ENCODE measurements at regions of chr6 and their contacts with region 1.

Region 1: GRCh38 chr6:110682460-110682853 is 132.8 kb downstream of the CDK19 start:
- DNase-seq: peak; percentile 73
- ATAC-seq: peak; percentile 99
- H3K4me3 Mint-ChIP-seq: no peak overlapping the region
- H3K27ac Mint-ChIP-seq: no peak overlapping the region
- H3K4me1 Mint-ChIP-seq: peaks cover 12% of the 10 kb centered on the region
- H3K27me3 Mint-ChIP-seq: no peaks in the 10 kb centered on the region

Region 2: DNA sequence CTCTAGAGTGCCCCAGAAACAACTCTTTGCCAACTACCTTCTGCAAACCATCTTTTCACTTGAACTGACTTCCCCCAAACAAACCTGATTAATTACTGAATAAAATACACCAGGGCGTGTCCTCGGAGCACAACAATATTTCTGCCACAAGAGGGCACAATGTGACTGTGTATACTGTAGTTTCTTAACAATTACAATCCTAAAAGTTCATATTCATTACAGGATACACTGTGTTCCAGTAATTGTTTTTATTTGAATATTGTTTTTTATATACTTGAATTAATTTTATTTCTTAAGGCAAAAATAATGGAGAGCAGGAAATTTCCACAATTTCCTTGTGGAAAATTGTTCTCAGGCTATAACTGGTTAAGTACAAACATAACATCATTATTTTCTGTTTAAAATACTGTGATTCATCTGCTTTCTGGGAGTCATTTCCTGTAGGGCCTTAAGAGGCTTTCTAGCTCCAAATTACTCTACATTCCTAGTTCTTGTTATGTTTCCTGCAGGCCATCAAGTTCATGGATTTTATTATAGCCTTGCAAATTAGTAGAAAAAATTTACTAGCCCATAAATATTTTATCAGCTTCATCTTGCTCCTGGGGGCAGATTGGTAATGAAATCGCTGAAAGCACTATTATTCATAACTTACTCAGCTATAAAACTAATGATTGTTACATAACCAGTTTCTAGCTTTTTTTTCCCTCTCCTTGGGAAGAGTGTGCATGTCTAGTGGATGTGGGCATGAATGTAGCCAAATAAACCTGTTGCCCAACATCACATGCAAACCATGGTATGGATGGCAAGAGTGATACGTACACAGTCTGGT is 154.1 kb before region 1 on chr6:
- CTCF ChIA-PET with region 1: interaction called, 11 read pairs
- POLR2A ChIA-PET with region 1: interaction called, 4 read pairs
- intact Hi-C with region 1: loop called (anchors 1 kb)
- DNase-seq: peak; percentile 69
- ATAC-seq: peak; percentile 77
- H3K4me3 Mint-ChIP-seq: no peak overlapping the region
- H3K27ac Mint-ChIP-seq: no peak overlapping the region
- H3K4me1 Mint-ChIP-seq: peaks cover 9% of the 10 kb centered on the region
- H3K27me3 Mint-ChIP-seq: peaks cover 4% of the 10 kb centered on the region

Region 3: GRCh38 chr6:110738899-110739365 is 56.5 kb after region 1 on chr6:
- CTCF ChIA-PET with region 1: no interaction called
- POLR2A ChIA-PET with region 1: no interaction called
- intact Hi-C with region 1: no loop called
- DNase-seq: no peak
- ATAC-seq: no peak
- H3K4me3 Mint-ChIP-seq: no peak overlapping the region
- H3K27ac Mint-ChIP-seq: no peak overlapping the region
- H3K4me1 Mint-ChIP-seq: peaks cover 2% of the 10 kb centered on the region
- H3K27me3 Mint-ChIP-seq: no peaks in the 10 kb centered on the region

Region 4: DNA sequence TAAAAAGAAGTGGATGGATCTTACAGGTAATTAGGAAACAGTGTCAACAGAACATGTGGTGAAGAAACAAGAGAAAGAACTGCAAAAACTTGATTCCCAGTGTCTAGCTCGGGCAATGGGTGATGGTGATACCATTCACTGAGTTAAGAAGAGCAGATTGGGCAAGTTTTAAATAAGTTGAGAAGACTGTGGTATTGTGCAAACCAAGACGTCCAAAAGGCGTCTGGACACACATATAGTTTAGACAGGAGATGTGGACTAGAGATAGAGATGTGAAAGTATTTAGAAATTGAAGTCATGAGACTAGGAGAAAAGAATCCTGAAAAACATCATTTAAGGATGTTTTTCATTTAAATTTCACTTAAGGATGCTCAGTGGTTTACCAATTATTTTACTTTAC is 78.9 kb after region 1 on chr6:
- CTCF ChIA-PET with region 1: no interaction called
- POLR2A ChIA-PET with region 1: no interaction called
- intact Hi-C with region 1: no loop called
- DNase-seq: no peak
- ATAC-seq: no peak
- H3K4me3 Mint-ChIP-seq: no peak overlapping the region
- H3K27ac Mint-ChIP-seq: no peak overlapping the region
- H3K4me1 Mint-ChIP-seq: peaks cover 3% of the 10 kb centered on the region
- H3K27me3 Mint-ChIP-seq: no peaks in the 10 kb centered on the region

Region 5: GRCh38 chr6:110784610-110784979 is 102.1 kb after region 1 on chr6:
- CTCF ChIA-PET with region 1: no interaction called
- POLR2A ChIA-PET with region 1: no interaction called
- intact Hi-C with region 1: no loop called
- DNase-seq: no peak
- ATAC-seq: peak; percentile 55
- H3K4me3 Mint-ChIP-seq: no peak overlapping the region
- H3K27ac Mint-ChIP-seq: no peak overlapping the region
- H3K4me1 Mint-ChIP-seq: peaks cover 39% of the 10 kb centered on the region
- H3K27me3 Mint-ChIP-seq: no peaks in the 10 kb centered on the region

Region 6: GRCh38 chr6:110944681-110945151 is 262.3 kb after region 1 on chr6:
- CTCF ChIA-PET with region 1: interaction called, 27 read pairs
- POLR2A ChIA-PET with region 1: interaction called, 3 read pairs
- intact Hi-C with region 1: loop called (anchors 1 kb)
- DNase-seq: peak; percentile 71
- ATAC-seq: peak; percentile 98
- H3K4me3 Mint-ChIP-seq: no peak overlapping the region
- H3K27ac Mint-ChIP-seq: peak overlapping the region; percentile 60
- H3K4me1 Mint-ChIP-seq: peaks cover 15% of the 10 kb centered on the region
- H3K27me3 Mint-ChIP-seq: no peaks in the 10 kb centered on the region

Region 7: DNA sequence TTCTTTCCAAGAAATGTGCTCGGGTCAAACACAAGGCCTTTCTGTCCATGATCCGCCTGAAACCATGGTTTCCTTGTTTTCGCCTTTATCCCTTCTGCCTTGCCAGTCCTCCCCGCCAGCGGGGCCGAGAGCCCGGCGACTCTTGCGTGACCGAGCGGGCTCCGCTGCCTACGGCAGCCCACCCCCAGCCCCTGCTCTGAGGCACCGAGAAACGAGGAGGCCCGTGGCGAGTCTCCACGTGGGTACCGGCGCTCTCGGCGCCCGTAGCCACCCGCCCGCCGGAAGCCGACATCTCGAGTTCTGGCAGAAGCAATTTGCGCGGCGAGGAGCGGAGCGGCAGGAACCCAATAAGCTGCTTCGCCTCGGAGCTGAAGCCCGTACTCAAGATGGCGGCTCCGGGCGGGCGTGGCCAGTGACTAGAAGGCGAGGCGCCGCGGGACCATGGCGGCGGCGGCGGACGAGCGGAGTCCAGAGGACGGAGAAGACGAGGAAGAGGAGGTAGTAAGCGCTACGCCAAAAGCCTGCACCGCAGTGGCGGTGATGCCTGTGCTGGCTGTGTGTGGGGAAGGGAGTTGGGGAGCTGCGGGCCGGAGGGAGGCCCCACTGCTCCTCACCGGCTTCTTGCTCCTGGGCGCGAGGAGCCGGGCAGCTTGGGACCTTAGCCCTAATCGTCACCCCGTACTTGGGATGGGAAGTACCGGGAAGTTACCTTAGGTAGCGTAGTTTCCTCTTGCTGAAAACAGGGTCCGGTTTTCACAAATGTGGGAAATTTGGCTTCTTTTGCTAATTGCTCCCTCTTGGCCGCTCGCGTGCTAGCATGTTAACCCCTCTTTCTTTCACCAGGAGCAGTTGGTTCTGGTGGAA is 276.1 kb after region 1 on chr6 and contains the start of gene GTF3C6:
- CTCF ChIA-PET with region 1: interaction called, 10 read pairs
- POLR2A ChIA-PET with region 1: interaction called, 3 read pairs
- intact Hi-C with region 1: no loop called
- DNase-seq: peak; percentile 97
- ATAC-seq: peak; percentile 100
- H3K4me3 Mint-ChIP-seq: peak within 1 kb of the TSS; percentile 90
- H3K27ac Mint-ChIP-seq: peak within 1 kb of the TSS; percentile 97
- H3K4me1 Mint-ChIP-seq: peaks cover 14% of the 10 kb centered on the region
- H3K27me3 Mint-ChIP-seq: peaks cover 1% of the 10 kb centered on the region
- total RNA-seq, gene GTF3C6: 93.0 to 106 TPM

Region 8: GRCh38 chr6:110999634-111000270 is 317.3 kb after region 1 on chr6:
- CTCF ChIA-PET with region 1: interaction called, 7 read pairs
- POLR2A ChIA-PET with region 1: no interaction called
- intact Hi-C with region 1: loop called in 1 of 2 experiments (anchors 1 kb)
- DNase-seq: no peak
- ATAC-seq: no peak
- H3K4me3 Mint-ChIP-seq: no peak overlapping the region
- H3K27ac Mint-ChIP-seq: no peak overlapping the region
- H3K4me1 Mint-ChIP-seq: peaks cover 4% of the 10 kb centered on the region
- H3K27me3 Mint-ChIP-seq: no peaks in the 10 kb centered on the region

Region 9: DNA sequence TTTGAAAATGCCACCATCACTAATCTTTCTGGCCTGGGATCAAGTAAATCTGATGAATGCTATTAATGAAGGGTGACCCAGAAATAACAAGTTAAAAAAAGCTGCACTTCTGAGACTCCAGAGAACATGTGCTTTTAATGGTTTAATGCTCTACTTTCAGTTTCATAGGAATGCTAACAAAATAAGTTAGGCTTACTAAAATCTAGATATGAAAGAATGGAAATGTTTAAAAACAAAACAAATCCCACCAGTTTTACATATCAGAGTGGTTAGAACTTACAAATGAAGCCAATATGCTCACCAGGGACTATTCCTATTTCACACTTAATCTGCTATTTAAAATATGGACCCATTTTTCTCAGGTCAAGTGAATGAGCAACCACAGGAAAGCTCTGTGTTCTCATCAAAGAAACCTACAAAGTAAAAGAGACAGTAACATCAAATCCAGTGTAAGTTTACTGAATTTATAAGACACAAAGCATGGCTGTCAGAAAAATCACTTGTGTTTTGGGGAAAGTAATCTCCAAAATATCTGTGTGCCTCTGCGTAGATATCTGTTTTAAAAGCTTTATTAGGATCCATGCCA is 1150.5 kb after region 1 on chr6:
- CTCF ChIA-PET with region 1: no interaction called
- POLR2A ChIA-PET with region 1: no interaction called
- intact Hi-C with region 1: loop called in 1 of 2 experiments (anchors 5 kb)
- DNase-seq: no peak
- ATAC-seq: no peak
- H3K4me3 Mint-ChIP-seq: peak overlapping the region; percentile 60
- H3K27ac Mint-ChIP-seq: peak overlapping the region; percentile 94
- H3K4me1 Mint-ChIP-seq: peaks cover 94% of the 10 kb centered on the region
- H3K27me3 Mint-ChIP-seq: no peaks in the 10 kb centered on the region